Common myeloid progenitor, CD34-positive (primary cell): ENCODE measurements at regions of chr2 and their contacts with region 1.

Region 1: DNA sequence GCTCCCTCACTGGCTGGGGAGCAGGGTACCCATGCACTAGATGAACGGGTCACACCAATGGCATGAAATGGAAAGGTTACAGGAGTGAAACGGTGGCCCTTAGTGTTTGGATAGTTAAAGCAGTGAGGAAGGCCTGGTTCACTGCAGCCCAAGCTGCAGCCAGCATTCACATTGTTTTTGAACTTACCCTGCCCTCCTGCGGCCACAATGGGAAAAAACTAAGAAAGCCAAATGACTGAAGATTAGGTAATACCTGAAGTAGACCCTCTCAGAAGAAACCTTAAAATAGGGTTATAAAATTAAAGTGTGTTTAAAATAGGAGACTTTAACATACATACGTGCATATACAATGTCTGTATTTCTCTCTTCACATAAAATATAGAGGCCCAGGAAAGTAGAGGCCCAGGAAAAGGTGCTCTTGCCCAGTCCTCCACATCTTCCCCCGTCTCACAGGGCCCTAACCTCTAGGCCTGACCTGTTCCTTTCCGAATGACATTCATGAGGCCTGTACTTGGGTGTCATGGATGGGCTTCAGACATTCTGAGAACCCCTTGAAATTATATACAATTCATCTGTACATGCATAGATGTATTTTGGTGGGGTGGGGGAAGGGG is 33.3 kb downstream of the DOK1 start:
- DNase-seq: peak; percentile 77 to 88 (median 84)
- H3K4me3 ChIP-seq: no peak overlapping the region
- H3K27ac ChIP-seq: no peak overlapping the region
- H3K4me1 ChIP-seq: peaks cover 17 to 48% (median 26%) of the 10 kb centered on the region in 4 experiments
- H3K27me3 ChIP-seq: no peaks in the 10 kb centered on the region

Region 2: DNA sequence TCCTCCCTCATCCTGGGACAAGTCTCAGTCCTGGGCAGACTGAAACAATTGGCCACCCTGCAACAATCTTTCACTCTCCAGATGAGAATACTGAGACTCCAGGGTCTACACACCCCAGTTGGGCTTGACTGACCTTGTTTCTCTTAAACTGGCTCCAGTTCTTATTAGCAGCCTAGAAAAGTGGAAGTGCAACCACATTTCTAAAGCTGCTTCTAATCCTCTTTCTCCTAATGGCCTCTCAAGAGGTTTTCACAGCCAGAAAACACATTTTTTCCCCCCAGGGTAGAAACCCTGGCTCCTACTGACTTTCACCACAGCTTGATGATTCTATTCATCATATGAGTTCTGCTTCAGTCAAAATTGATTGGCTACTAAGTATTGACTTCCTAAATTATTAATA is 290.4 kb before region 1 on chr2:
- CTCF ChIA-PET with region 1: no interaction called
- POLR2A ChIA-PET with region 1: no interaction called
- DNase-seq: no peak
- H3K4me3 ChIP-seq: no peak overlapping the region
- H3K27ac ChIP-seq: no peak overlapping the region
- H3K4me1 ChIP-seq: no peaks in the 10 kb centered on the region
- H3K27me3 ChIP-seq: no peaks in the 10 kb centered on the region

Region 3: DNA sequence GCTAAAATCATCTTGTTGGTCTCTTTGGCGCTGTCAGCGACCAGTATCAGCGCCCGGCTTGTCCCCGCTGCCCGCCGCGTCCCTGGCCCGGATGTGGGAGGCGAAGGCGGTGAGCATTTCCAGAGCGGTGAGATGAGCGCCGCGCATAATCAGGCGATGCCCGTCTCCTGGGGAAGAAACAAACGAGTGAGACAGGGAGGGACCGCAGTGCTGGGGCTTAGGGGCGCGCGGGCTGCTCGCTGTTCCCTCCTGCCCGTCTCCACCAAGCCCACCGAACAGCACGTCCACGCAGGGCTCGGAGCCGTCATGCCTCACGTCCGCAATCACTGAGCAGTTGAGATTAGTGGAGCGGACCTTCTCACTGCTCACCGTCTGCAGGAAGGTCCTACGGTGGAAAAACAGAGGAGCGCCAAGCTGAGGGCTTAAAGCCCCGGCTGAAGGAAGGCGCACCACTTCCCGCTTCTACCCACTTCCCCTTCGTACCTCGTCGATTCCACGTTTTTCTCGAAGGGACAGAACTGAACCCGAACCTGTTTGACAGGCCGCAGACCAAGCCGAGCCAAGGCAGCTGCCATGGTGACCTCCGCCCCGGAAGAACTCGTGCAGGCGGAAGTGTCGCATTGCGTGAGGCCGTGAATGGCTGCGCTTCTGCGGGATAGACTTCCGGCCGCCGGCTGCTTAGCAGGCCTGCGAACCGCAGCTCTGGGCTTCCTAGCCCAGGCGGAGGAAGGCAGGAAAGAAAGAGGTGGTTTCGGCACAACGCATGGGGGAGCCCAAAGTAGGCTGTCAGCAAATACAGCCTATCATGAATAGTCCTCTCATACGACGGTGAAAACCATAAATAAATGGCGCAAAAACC is 115.5 kb before region 1 on chr2 and contains the start of gene MRPL53:
- CTCF ChIA-PET with region 1: interaction called, 19 read pairs
- POLR2A ChIA-PET with region 1: no interaction called
- DNase-seq: peak; percentile 98 to 99 (median 99)
- H3K4me3 ChIP-seq: peak within 1 kb of the TSS; percentile 40 to 93 (median 87)
- H3K27ac ChIP-seq: peak within 1 kb of the TSS; percentile 78 to 84
- H3K4me1 ChIP-seq: peaks cover 7 to 35% (median 21%) of the 10 kb centered on the region in 4 experiments
- H3K27me3 ChIP-seq: no peaks in the 10 kb centered on the region

Region 4: DNA sequence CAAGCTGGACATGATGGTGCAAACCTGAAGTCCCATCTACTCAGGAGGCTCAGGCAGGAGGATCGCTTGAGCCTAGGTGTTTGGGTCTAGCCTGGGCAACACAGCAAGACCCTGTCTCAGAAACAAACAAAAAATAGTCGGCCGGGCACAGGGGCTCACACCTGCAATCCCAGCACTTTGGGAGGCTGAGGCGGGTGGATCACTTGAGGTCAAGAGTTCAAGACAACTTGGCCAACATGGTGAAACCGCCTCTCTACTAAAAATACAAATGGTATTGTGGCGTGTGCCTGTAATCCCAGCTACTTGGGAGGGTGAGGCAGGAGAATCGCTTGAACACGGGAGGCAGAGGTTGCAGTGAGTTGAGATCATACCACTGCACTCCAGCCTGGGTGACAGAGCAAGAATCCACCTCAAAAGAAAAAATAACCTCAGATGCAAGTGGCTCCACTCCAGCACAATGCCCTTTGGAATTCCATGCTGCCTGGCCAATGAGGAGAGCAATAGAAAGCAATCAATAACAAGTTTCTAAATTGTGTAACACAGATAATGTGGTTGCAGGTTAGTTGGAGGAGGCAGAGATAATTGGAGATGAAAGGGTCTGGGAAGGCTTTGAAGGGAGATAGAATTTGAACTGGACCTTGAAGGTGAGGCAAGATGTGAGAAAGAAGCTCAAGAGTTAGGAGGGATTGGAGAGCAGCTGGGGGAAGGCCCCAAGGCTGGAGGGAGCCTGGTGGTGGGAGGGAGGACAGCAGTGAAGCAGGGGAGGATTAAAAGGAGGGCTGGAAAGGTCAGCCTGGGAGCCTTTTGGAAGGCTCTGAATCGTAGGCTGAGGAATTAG is 98.9 kb before region 1 on chr2:
- CTCF ChIA-PET with region 1: interaction called, 75 read pairs
- POLR2A ChIA-PET with region 1: no interaction called
- DNase-seq: no peak
- H3K4me3 ChIP-seq: no peak overlapping the region
- H3K27ac ChIP-seq: no peak overlapping the region
- H3K4me1 ChIP-seq: peaks cover 0 to under 1% (median 0%) of the 10 kb centered on the region in 4 experiments
- H3K27me3 ChIP-seq: no peaks in the 10 kb centered on the region

Region 5: GRCh38 chr2:74507145-74507925 is 80.4 kb before region 1 on chr2 and contains the start of gene PCGF1:
- CTCF ChIA-PET with region 1: interaction called, 93 read pairs
- POLR2A ChIA-PET with region 1: no interaction called
- DNase-seq: peak; percentile 97 to 98 (median 97)
- H3K4me3 ChIP-seq: peak within 1 kb of the TSS; percentile 80 to 99 (median 91)
- H3K27ac ChIP-seq: peak within 1 kb of the TSS; percentile 92 to 96
- H3K4me1 ChIP-seq: peaks cover 0 to 52% (median 34%) of the 10 kb centered on the region in 4 experiments
- H3K27me3 ChIP-seq: peaks cover 7 to 63% (median 33%) of the 10 kb centered on the region in 5 experiments

Region 6: DNA sequence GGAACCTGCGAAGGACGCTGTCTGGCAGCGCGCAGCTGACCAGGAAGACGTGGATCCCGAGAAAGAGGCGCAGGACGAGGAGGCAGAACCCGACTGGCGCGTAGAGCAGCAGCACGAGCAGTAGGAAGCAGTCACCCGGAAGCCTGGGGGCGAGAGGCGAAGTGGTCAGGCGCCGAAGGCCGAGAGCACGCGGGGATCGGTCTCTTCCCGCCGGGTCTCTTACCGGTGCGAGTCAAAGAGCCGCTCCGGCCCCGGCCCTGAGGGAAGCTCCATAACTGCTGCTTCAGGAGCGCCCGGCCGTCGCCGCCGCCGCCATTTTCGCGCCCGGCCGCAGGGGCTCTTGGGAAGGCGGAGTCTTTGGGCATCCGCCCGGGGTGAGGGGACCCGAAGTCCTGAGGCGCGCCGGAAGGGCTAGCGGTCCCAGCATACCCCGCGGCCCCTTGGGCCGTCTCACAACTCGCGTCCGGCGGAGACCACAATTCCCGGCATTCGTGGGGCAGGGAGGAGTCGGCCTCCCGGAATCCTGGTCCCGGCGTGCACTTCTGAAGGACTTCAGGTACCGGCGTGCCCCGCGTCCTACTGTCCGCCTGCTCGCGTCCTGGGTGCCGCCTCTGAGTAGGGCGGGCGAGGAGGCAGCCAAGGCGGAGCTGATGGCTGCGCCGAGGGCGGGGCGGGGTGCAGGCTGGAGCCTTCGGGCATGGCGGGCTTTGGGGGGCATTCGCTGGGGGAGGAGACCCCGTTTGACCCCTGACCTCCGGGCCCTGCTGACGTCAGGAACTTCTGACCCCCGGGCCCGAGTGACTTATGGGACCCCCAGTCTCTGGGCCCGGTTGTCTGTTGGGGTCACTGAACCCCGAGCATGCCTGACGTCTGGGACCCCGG is 58.2 kb before region 1 on chr2 and contains the starts of genes AUP1 and HTRA2:
- CTCF ChIA-PET with region 1: interaction called, 210 read pairs
- POLR2A ChIA-PET with region 1: no interaction called
- DNase-seq: peak; percentile 76 to 87 (median 79)
- H3K4me3 ChIP-seq: peak within 1 kb of the TSS; percentile 77 to 96 (median 86)
- H3K27ac ChIP-seq: peak within 1 kb of the TSS; percentile 80 to 86
- H3K4me1 ChIP-seq: peaks cover 6 to 43% (median 25%) of the 10 kb centered on the region in 4 experiments
- H3K27me3 ChIP-seq: no peaks in the 10 kb centered on the region

Region 7: DNA sequence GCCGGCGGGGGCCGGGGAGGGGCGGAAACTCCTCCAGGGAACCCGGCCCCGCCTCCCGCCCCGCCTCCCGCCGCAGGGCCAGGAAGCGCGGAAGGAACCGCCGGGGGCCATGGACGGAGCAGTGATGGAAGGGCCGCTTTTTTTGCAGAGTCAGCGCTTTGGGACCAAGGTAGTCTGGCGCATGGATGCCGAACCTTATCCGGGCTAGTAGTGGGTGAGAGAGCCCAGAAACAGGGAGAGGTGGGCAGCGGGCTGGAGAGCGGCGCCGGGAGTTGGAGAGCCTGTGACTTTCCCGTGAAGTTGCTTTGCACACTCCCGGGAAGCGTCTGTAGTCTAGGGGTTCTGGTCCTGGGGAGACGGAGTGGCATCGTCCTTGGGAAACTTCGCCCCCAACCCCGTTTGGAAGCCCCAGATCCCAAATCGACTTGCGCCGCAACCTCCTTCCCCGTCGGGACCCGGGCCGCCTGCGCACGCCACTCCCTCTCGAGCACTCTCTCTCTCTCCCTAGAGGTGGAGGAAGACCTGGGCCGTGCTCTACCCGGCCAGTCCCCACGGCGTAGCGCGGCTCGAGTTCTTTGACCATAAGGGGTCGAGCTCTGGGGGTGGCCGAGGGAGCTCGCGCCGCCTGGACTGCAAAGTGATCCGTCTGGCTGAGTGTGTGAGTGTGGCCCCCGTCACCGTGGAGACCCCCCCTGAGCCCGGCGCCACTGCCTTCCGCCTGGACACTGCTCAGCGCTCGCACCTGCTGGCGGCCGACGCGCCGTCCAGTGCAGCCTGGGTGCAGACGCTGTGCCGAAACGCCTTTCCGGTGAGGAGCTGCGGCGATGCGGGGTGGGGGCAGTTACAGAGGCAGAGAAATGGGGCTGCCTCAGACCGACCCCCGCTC is 32.9 kb before region 1 on chr2 and contains the start of gene DOK1:
- CTCF ChIA-PET with region 1: interaction called, 35 read pairs
- POLR2A ChIA-PET with region 1: no interaction called
- DNase-seq: peak in 2 of 3 donors; percentile 72 to 76
- H3K4me3 ChIP-seq: peak within 1 kb of the TSS; percentile 65 to 98 (median 93)
- H3K27ac ChIP-seq: peak within 1 kb of the TSS in 1 of 2 experiments; percentile 78
- H3K4me1 ChIP-seq: peaks cover 0 to 76% (median 38%) of the 10 kb centered on the region in 4 experiments
- H3K27me3 ChIP-seq: no peaks in the 10 kb centered on the region

Region 8: GRCh38 chr2:74602586-74603281 is 15.0 kb after region 1 on chr2:
- CTCF ChIA-PET with region 1: interaction called, 72 read pairs
- POLR2A ChIA-PET with region 1: interaction called, 3 read pairs
- DNase-seq: no peak
- H3K4me3 ChIP-seq: no peak overlapping the region
- H3K27ac ChIP-seq: no peak overlapping the region
- H3K4me1 ChIP-seq: no peaks in the 10 kb centered on the region
- H3K27me3 ChIP-seq: peaks cover 0 to 6% (median 0%) of the 10 kb centered on the region in 5 experiments

Region 9: GRCh38 chr2:74725287-74725686 is 137.5 kb after region 1 on chr2:
- CTCF ChIA-PET with region 1: no interaction called
- POLR2A ChIA-PET with region 1: no interaction called
- DNase-seq: no peak
- H3K4me3 ChIP-seq: no peak overlapping the region
- H3K27ac ChIP-seq: no peak overlapping the region
- H3K4me1 ChIP-seq: no peaks in the 10 kb centered on the region
- H3K27me3 ChIP-seq: no peaks in the 10 kb centered on the region